Vagina (tissue), 2 donors: ENCODE measurements at regions of chr5 and their contacts with region 1.

Region 1: DNA sequence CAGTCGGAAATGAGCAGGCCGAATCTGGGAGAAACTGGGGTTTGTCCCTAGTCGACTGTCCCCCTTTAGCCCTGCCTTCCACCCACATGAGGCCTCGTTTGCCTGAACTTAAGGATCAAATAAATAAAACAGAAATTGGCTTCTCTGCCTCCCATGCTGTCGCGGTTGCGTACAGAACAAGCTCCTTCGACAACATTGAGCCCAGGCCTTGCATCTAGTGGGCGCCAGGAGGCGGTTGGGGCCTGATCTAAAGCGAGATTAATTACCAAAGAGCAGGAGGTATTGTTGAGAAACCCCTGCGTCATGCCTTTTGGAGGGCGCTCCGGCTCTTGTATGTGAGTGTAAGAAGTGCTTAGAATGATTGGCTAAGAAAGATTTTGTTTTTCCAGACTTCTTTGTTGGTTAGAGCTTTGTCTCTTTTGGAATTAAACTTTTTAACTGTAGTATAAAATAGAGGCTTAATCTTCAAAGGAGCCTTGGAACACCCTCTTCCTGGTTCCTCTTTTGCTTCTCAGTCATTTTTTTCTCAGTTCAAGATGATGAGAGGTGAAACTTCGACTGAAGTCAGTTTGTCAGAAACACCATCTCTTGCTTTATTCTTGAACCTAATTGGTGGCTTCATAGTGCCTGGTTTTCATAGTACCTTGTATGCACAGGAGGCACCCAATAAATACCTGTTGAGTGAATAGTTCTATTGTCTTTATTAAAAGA is 827 bp downstream of the ATP6V0E1 start:
- DNase-seq: peak in 1 of 2 donors; percentile 90
- H3K4me3 ChIP-seq: peak overlapping the region; percentile 87 to 96
- H3K27ac ChIP-seq: peak overlapping the region; percentile 98
- H3K4me1 ChIP-seq: peaks cover 52% of the 10 kb centered on the region
- H3K27me3 ChIP-seq: no peaks in the 10 kb centered on the region
- CTCF ChIP-seq: peak in 1 of 3 experiments; percentile 28
- POLR2A ChIP-seq: no peak

Region 2: GRCh38 chr5:173144200-173145176 is 160.1 kb after region 1 on chr5 and contains the start of gene BNIP1:
- intact Hi-C with region 1: loop called (anchors 10 kb)
- DNase-seq: peak in 1 of 2 donors; percentile 91
- H3K4me3 ChIP-seq: peak within 1 kb of the TSS; percentile 55 to 65
- H3K27ac ChIP-seq: peak within 1 kb of the TSS; percentile 84
- H3K4me1 ChIP-seq: peaks cover 9% of the 10 kb centered on the region
- H3K27me3 ChIP-seq: no peaks in the 10 kb centered on the region
- CTCF ChIP-seq: peak; percentile 84 to 91 (median 88)
- POLR2A ChIP-seq: no peak
- total RNA-seq, gene BNIP1: 12.5 TPM

Region 3: GRCh38 chr5:173283318-173284288 is 299.2 kb after region 1 on chr5:
- intact Hi-C with region 1: loop called (anchors 5 kb)
- DNase-seq: no peak
- H3K4me3 ChIP-seq: peak overlapping the region; percentile 3 to 9
- H3K27ac ChIP-seq: no peak overlapping the region
- H3K4me1 ChIP-seq: peaks cover 12% of the 10 kb centered on the region
- H3K27me3 ChIP-seq: peaks cover 3% of the 10 kb centered on the region
- CTCF ChIP-seq: peak; percentile 25 to 35 (median 25)
- POLR2A ChIP-seq: no peak